Activated T-helper 1 cell treated with anti-CD3 and anti-CD28 coated beads, Interleukin-12 subunit alpha, Interleukin-12 subunit beta, Interleukin-2, Interleukin-4 antibody, amounts not matched to agents 30 ng/mL and 10 ng/mL and 1 ng/mL, durations not matched to agents 14 hours and 24 hours and 36 hours (primary cell): ENCODE measurements at regions of chr6 and their contacts with region 1.

Region 1: GRCh38 chr6:142112451-142113061 is 20.2 kb upstream of the GJE1 start:
- DNase-seq: peak; percentile 20
- H3K4me3 Mint-ChIP-seq: no peak overlapping the region
- H3K27ac Mint-ChIP-seq: no peak overlapping the region
- H3K4me1 Mint-ChIP-seq: no peaks in the 10 kb centered on the region
- H3K27me3 Mint-ChIP-seq: peaks cover 3% of the 10 kb centered on the region

Region 2: GRCh38 chr6:141677598-141678211 is 434.9 kb before region 1 on chr6:
- intact Hi-C with region 1: loop called (anchors 2 kb)
- DNase-seq: no peak
- H3K4me3 Mint-ChIP-seq: no peak overlapping the region
- H3K27ac Mint-ChIP-seq: no peak overlapping the region
- H3K4me1 Mint-ChIP-seq: no peaks in the 10 kb centered on the region
- H3K27me3 Mint-ChIP-seq: no peaks in the 10 kb centered on the region

Region 3: GRCh38 chr6:141988954-141989705 is 123.4 kb before region 1 on chr6:
- intact Hi-C with region 1: loop called (anchors 1 kb)
- DNase-seq: no peak
- H3K4me3 Mint-ChIP-seq: no peak overlapping the region
- H3K27ac Mint-ChIP-seq: no peak overlapping the region
- H3K4me1 Mint-ChIP-seq: no peaks in the 10 kb centered on the region
- H3K27me3 Mint-ChIP-seq: no peaks in the 10 kb centered on the region

Region 4: DNA sequence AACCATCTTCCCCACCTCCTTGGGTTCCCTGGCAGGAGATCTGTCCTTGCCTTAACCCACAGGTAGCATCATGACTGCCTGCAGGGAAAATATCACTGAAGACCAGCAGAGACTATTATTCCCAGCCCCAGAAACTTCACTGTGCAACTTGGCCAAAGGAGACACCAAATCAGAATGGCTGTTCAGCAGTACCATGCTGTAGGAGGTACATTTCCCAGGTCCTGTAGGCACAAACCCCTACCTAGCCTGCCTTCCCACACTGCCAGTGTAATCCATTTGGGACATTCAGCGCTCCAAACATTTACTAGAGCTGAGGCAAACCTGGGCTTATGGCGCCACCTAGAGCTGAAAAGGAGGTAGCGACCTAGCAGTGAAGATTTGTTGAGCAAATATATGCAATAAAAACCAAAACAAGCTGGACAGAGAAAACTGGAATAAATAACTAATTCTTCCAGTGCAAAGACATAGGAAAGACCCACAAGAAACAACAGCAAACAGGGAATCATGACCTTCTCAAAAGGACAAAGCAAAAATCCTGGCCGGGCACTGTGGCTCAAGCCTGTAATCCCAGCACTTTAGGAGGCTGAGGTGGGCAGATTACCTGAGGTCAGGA is 94.8 kb after region 1 on chr6:
- intact Hi-C with region 1: loop called (anchors 1 kb)
- DNase-seq: peak; percentile 6
- H3K4me3 Mint-ChIP-seq: no peak overlapping the region
- H3K27ac Mint-ChIP-seq: no peak overlapping the region
- H3K4me1 Mint-ChIP-seq: no peaks in the 10 kb centered on the region
- H3K27me3 Mint-ChIP-seq: no peaks in the 10 kb centered on the region